ENCODE measurements at regions of chr11 and their contacts with region 1.

Region 1: DNA sequence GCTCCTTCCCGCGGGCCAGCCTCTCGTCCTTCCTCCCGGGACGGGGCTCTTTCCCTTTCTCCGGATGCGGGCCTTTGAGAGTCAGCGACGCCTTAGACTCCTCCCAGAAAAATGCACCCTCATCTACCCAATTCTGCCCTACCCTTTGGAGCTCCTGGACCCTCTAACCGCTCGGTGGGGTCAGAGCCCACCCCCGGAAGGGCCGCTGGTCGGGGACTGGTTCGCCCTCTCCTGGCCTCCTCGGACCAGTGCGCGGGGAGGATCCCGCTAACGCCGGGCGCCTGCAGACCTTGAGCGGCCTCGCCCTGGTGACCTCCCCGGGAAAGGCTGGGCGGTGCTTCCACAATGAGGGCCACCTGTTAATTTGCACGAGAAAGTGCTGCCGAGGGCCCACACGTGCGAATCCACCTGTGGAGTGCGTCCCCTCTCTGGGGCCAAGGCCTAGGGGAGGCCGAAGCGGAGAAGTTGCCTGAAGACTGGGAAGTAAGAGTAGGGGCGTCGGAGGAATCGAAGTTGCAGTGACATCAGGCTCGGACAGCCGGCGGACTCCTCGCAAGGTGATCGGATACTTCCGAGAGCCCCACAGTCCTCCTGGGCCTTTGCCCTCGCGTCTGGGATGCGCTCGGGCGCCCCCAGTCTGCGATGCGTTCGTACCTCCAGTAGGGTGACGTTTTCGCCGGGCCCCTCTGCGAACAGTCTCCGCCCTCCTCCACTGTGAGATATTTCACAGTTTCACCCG is 61.5 kb downstream of the ENDOD1 start:
- DNase-seq: peak; percentile 95
- H3K4me3 ChIP-seq: peak overlapping the region; percentile 25 to 54 (median 42)
- H3K27ac ChIP-seq: peak overlapping the region; percentile 86 to 93 (median 90)
- H3K4me1 ChIP-seq: peaks cover 0 to 25% (median 14%) of the 10 kb centered on the region in 4 donors
- H3K27me3 ChIP-seq: no peaks in the 10 kb centered on the region
- CTCF ChIP-seq: peak; percentile 65 to 96 (median 79)
- EP300 ChIP-seq: no peak
- POLR2A ChIP-seq: peak; percentile 74

Region 2: GRCh38 chr11:94958121-94958696 is 192.9 kb before region 1 on chr11:
- in situ Hi-C with region 1: no loop called
- intact Hi-C with region 1: no loop called
- DNase-seq: no peak
- H3K4me3 ChIP-seq: no peak overlapping the region
- H3K27ac ChIP-seq: no peak overlapping the region
- H3K4me1 ChIP-seq: no peaks in the 10 kb centered on the region
- H3K27me3 ChIP-seq: no peaks in the 10 kb centered on the region
- CTCF ChIP-seq: no peak
- EP300 ChIP-seq: no peak
- POLR2A ChIP-seq: no peak

Region 3: GRCh38 chr11:95067039-95067840 is 83.9 kb before region 1 on chr11:
- in situ Hi-C with region 1: loop called in 2 of 4 experiments (anchors 10 kb)
- intact Hi-C with region 1: loop called (anchors 2 kb)
- DNase-seq: peak; percentile 85
- H3K4me3 ChIP-seq: peak overlapping the region; percentile 58 to 85 (median 78)
- H3K27ac ChIP-seq: peak overlapping the region; percentile 94 to 99 (median 98)
- H3K4me1 ChIP-seq: peaks cover 3 to 17% (median 15%) of the 10 kb centered on the region in 4 donors
- H3K27me3 ChIP-seq: no peaks in the 10 kb centered on the region
- CTCF ChIP-seq: peak; percentile 54 to 77 (median 64)
- EP300 ChIP-seq: no peak
- POLR2A ChIP-seq: peak; percentile 84

Region 4: GRCh38 chr11:95076416-95076815 is 74.7 kb before region 1 on chr11:
- in situ Hi-C with region 1: loop called in 1 of 4 experiments (anchors 10 kb)
- intact Hi-C with region 1: no loop called
- DNase-seq: no peak
- H3K4me3 ChIP-seq: no peak overlapping the region
- H3K27ac ChIP-seq: no peak overlapping the region
- H3K4me1 ChIP-seq: peaks cover 5 to 23% (median 12%) of the 10 kb centered on the region in 4 donors
- H3K27me3 ChIP-seq: no peaks in the 10 kb centered on the region
- CTCF ChIP-seq: no peak
- EP300 ChIP-seq: no peak
- POLR2A ChIP-seq: no peak

Region 5: GRCh38 chr11:95453616-95454171 is 302.6 kb after region 1 on chr11:
- in situ Hi-C with region 1: no loop called
- intact Hi-C with region 1: no loop called
- DNase-seq: no peak
- H3K4me3 ChIP-seq: no peak overlapping the region
- H3K27ac ChIP-seq: no peak overlapping the region
- H3K4me1 ChIP-seq: no peaks in the 10 kb centered on the region
- H3K27me3 ChIP-seq: no peaks in the 10 kb centered on the region
- CTCF ChIP-seq: no peak
- EP300 ChIP-seq: no peak
- POLR2A ChIP-seq: no peak

Region 6: DNA sequence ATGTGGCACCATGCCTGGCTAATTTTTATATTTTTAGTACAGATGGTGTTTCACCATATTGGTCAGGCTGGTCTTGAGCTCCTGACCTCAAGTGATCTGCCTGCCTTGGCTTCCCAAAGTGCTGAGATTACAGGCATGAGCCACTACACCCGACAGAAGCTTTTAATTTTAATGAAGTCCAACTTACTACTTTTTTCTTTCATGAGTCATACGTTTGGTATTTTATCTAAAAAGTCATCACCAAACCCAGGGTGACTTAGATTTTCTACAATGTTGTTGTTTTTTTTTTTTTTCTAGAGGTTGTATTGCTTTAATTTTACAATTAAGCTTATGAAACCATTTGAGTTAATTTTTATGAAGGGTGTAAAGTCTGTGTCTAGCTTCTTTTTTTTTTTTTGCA is 1273.6 kb after region 1 on chr11:
- in situ Hi-C with region 1: loop called in 1 of 4 experiments (anchors 25 kb)
- intact Hi-C with region 1: no loop called
- DNase-seq: no peak
- H3K4me3 ChIP-seq: no peak overlapping the region
- H3K27ac ChIP-seq: no peak overlapping the region
- H3K4me1 ChIP-seq: no peaks in the 10 kb centered on the region
- H3K27me3 ChIP-seq: peaks cover 55% of the 10 kb centered on the region
- CTCF ChIP-seq: no peak
- EP300 ChIP-seq: no peak
- POLR2A ChIP-seq: no peak

Measured in transverse colon (tissue), 4 donors.